Activated T-helper 1 cell treated with anti-CD3 and anti-CD28 coated beads, Interleukin-12 subunit alpha, Interleukin-12 subunit beta, Interleukin-2, Interleukin-4 antibody, amounts not matched to agents 30 ng/mL and 10 ng/mL and 1 ng/mL, durations not matched to agents 14 hours and 24 hours and 36 hours (primary cell): ENCODE measurements at regions of chr19 and their contacts with region 1.

Region 1: DNA sequence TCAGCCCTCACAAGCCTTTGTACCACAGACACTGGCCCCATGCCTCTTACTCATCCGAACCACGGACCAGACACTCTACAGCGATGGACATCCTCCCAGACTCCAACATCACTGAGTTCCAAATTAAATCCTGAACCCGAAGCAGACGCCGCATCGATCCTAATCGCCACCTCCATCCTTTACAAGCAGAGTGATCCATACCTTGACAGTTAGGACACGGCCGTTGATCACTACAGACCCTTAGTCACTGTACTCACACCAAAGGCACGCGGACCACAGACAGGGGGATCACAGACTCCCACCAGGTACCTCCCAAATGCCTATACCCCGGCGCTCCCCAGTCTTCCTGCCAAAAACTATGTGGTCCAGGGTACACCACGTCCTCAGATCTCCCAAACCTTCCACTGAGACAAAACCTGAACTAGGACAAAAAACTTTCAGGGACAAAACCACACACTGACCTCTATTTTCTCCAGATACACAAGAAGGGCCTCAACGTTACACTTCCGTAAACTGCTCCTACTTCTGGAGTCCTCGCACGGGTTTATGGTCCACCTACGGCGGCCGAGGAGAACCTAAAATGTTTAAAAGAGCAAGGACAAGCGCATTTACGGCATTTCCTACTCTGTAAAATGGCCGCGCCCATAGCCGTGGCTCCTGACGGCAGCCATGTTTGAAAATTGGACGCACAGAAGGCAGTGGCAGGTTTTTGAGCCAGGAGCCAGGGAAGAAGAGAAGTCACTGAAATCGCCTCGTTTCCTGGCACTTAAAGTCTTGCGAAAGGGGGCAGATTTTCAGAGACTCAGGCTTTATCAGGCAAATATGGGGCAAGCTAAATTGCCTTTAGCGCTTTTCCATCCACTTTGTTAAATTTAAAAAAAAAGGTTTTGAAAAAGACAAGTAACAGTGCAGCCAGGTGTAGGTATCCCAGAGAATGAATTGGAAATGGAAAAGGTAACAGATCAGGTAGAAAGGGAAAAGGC is at the start of gene ZNF350:
- DNase-seq: peak; percentile 83
- H3K4me3 Mint-ChIP-seq: peak within 1 kb of the TSS; percentile 94
- H3K27ac Mint-ChIP-seq: peak within 1 kb of the TSS; percentile 88
- H3K4me1 Mint-ChIP-seq: peaks cover 12% of the 10 kb centered on the region
- H3K27me3 Mint-ChIP-seq: no peaks in the 10 kb centered on the region
- total RNA-seq, gene ZNF350: 7.9 and 8.7 TPM in 2 replicates

Region 2: GRCh38 chr19:51904331-51905165 is 82.1 kb before region 1 on chr19 and contains the start of gene ZNF649:
- intact Hi-C with region 1: loop called (anchors 1 kb)
- DNase-seq: peak; percentile 70
- H3K4me3 Mint-ChIP-seq: peak within 1 kb of the TSS; percentile 98
- H3K27ac Mint-ChIP-seq: peak within 1 kb of the TSS; percentile 99
- H3K4me1 Mint-ChIP-seq: peaks cover 21% of the 10 kb centered on the region
- H3K27me3 Mint-ChIP-seq: peaks cover 3% of the 10 kb centered on the region
- total RNA-seq, gene ZNF649: 10.5 and 12.3 TPM in 2 replicates

Region 3: DNA sequence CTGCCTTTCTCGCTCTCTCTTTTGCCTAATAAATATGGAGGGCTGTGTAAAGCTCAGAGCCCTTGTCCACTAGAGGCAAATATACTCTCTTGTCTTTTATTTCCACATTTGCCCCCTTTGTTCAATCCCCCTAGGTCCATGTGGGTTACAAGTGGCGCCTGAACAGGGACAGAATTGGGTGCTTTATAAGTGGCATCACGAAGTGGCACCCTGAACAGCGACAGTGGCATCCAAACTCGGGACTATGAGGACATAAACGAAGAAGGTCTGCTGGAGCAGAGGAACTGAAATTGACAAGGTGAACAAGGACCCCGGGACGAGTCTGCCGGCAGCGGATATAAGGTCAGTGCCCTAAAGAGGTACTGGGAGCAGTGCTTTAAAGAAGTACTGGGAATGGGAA is 345.2 kb after region 1 on chr19:
- intact Hi-C with region 1: no loop called
- DNase-seq: no peak
- H3K4me3 Mint-ChIP-seq: no peak overlapping the region
- H3K27ac Mint-ChIP-seq: no peak overlapping the region
- H3K4me1 Mint-ChIP-seq: no peaks in the 10 kb centered on the region
- H3K27me3 Mint-ChIP-seq: no peaks in the 10 kb centered on the region